Activated T-helper 2 cell treated with anti-CD3 and anti-CD28 coated beads, Interferon-gamma antibody, Interleukin-2, Interleukin-4, amounts not matched to agents 10 μg/mL and 5 μg/mL and 100 μg/mL, durations not matched to agents 14 hours and 24 hours and 36 hours (primary cell): ENCODE measurements at regions of chr3 and their contacts with region 1.

Region 1: DNA sequence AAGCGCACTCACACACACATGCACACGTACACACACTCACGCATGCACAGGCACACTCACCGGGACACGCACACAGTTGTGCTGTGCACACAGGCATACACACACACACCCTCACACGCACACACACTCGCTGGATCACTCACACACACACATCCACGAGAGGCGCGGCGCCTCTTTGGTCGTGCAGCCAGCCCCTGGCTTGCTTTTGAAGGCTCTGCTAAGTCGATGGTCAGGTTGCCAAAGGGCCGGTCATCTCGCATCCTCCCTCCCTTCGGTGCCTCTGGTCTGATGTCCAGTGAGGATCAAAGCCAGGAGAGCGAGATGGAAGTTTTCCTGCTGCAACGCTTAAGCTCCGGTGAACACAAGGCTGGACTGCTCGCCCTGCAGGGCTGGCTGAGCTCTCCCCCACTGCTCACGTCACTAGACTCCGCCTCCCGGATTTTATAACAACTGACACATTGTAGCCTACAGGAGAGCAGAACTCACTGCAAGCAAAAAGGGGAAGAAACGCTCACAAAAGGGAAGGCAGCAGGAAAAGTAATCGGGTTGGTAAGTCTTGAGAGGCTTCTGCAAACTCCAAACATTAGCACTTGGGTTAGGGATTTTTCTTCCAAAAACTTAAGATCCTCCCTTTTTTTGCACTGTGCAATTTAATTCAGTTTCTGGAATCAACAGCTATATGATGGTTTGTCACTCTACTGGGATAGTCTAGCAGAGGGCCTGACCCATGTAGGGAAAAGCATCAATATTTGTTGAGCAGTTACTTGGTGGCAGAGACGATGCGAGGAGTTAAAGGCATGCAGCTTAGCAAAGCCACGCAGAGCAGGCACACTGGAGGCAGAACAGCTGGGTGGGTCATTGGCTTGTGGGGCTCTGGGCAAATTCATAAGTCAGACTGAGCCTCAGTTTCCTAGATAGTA is at the start of gene SRGAP3:
- DNase-seq: peak; percentile 79
- H3K4me3 Mint-ChIP-seq: peak within 1 kb of the TSS; percentile 85
- H3K27ac Mint-ChIP-seq: no peak within 1 kb of the TSS
- H3K4me1 Mint-ChIP-seq: peaks cover 25% of the 10 kb centered on the region
- H3K27me3 Mint-ChIP-seq: peaks cover 13% of the 10 kb centered on the region
- total RNA-seq, gene SRGAP3: 0.71 and 0.85 TPM in 2 replicates

Region 2: DNA sequence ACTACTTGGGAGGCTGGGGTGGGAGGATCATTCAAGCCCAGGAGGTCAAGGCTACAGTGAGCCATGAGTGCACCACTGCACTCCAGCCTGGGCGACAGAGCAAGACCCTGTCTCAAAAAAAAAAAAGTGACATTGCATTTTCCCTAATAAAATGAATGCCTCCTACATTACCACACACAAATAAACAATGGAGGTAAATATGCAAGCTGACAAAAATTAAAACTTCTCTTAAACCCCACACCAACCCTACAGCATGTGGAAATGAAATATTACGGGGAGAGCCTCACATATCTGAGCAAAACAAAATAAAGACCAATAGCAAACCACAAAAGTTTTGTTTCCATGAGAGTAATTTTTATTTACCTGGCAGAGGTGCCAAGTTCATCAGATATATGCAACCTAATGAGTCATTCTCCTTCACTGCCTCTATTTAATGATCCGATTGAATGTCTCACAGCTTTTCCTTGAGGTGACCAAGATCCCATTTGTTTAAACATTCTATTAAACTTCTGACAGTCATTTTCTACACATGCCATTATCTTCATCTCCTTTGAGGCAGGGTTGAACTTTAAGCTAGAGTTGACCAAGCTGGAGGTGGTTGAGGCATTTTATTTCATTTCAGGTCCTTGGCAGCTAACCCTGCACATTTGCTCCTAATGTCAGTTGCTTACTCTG is 525.3 kb before region 1 on chr3:
- intact Hi-C with region 1: no loop called
- DNase-seq: no peak
- H3K4me3 Mint-ChIP-seq: no peak overlapping the region
- H3K27ac Mint-ChIP-seq: no peak overlapping the region
- H3K4me1 Mint-ChIP-seq: no peaks in the 10 kb centered on the region
- H3K27me3 Mint-ChIP-seq: no peaks in the 10 kb centered on the region

Region 3: GRCh38 chr3:9168241-9168741 is 81.2 kb before region 1 on chr3:
- intact Hi-C with region 1: loop called (anchors 2 kb)
- DNase-seq: peak; percentile 77
- H3K4me3 Mint-ChIP-seq: no peak overlapping the region
- H3K27ac Mint-ChIP-seq: no peak overlapping the region
- H3K4me1 Mint-ChIP-seq: peaks cover 27% of the 10 kb centered on the region
- H3K27me3 Mint-ChIP-seq: no peaks in the 10 kb centered on the region

Region 4: GRCh38 chr3:9260305-9260704 is 10.8 kb after region 1 on chr3:
- intact Hi-C with region 1: no loop called
- DNase-seq: no peak
- H3K4me3 Mint-ChIP-seq: no peak overlapping the region
- H3K27ac Mint-ChIP-seq: no peak overlapping the region
- H3K4me1 Mint-ChIP-seq: no peaks in the 10 kb centered on the region
- H3K27me3 Mint-ChIP-seq: peaks cover 24% of the 10 kb centered on the region